Ascending aorta (tissue), 2 donors: ENCODE measurements at regions of chr13 and their contacts with region 1.

Region 1: GRCh38 chr13:48233046-48233907 is at the start of gene ITM2B:
- DNase-seq: peak in 1 of 2 donors; percentile 84
- H3K4me3 ChIP-seq: peak within 1 kb of the TSS; percentile 99 to 100
- H3K27ac ChIP-seq: peak within 1 kb of the TSS; percentile 100
- H3K4me1 ChIP-seq: peaks cover 6 to 23% of the 10 kb centered on the region in 2 donors
- H3K27me3 ChIP-seq: no peaks in the 10 kb centered on the region
- CTCF ChIP-seq: peak; percentile 24 to 54 (median 47)
- total RNA-seq, gene ITM2B: 345 TPM

Region 2: DNA sequence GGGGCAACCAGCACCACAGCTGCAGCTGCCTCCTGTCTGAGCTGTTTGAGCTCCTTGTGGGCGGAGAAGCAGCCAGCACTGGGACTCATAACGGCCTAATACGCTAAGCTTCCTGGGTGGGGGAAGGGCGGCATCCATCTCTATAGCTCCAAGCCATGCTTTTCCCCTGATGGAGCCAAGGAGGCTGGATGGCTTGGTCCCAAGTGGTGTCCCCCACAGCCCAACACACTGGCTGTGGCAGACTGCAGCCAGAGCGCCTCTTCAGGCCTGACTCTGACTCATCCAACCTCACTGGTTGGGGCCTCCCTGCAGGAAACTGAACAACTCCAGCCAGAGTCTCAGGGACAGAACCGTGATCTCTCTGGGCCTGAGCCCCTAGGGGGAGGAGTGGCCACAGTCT is 769.6 kb before region 1 on chr13:
- intact Hi-C with region 1: no loop called
- DNase-seq: no peak
- H3K4me3 ChIP-seq: no peak overlapping the region
- H3K27ac ChIP-seq: no peak overlapping the region
- H3K4me1 ChIP-seq: no peaks in the 10 kb centered on the region
- H3K27me3 ChIP-seq: no peaks in the 10 kb centered on the region
- CTCF ChIP-seq: no peak

Region 3: GRCh38 chr13:47621931-47622330 is 611.3 kb before region 1 on chr13:
- intact Hi-C with region 1: no loop called
- DNase-seq: no peak
- H3K4me3 ChIP-seq: no peak overlapping the region
- H3K27ac ChIP-seq: no peak overlapping the region
- H3K4me1 ChIP-seq: no peaks in the 10 kb centered on the region
- H3K27me3 ChIP-seq: no peaks in the 10 kb centered on the region
- CTCF ChIP-seq: no peak

Region 4: GRCh38 chr13:48037346-48038173 is 195.7 kb before region 1 on chr13 and contains the start of gene NUDT15:
- intact Hi-C with region 1: loop called (anchors 5 kb)
- DNase-seq: peak; percentile 61 to 95
- H3K4me3 ChIP-seq: peak within 1 kb of the TSS; percentile 78 to 91
- H3K27ac ChIP-seq: peak within 1 kb of the TSS; percentile 94 to 96
- H3K4me1 ChIP-seq: peaks cover 0 to 11% of the 10 kb centered on the region in 2 donors
- H3K27me3 ChIP-seq: no peaks in the 10 kb centered on the region
- CTCF ChIP-seq: peak; percentile 95 to 97 (median 96)
- total RNA-seq, gene NUDT15: 4.2 TPM

Region 5: GRCh38 chr13:48126944-48127830 is 106.1 kb before region 1 on chr13:
- intact Hi-C with region 1: loop called (anchors 1 kb)
- DNase-seq: peak in 1 of 2 donors; percentile 80
- H3K4me3 ChIP-seq: peak overlapping the region in 1 of 2 donors; percentile 43
- H3K27ac ChIP-seq: peak overlapping the region; percentile 80 to 91
- H3K4me1 ChIP-seq: peaks cover 8 to 13% of the 10 kb centered on the region in 2 donors
- H3K27me3 ChIP-seq: no peaks in the 10 kb centered on the region
- CTCF ChIP-seq: peak; percentile 61 to 65 (median 64)

Region 6: DNA sequence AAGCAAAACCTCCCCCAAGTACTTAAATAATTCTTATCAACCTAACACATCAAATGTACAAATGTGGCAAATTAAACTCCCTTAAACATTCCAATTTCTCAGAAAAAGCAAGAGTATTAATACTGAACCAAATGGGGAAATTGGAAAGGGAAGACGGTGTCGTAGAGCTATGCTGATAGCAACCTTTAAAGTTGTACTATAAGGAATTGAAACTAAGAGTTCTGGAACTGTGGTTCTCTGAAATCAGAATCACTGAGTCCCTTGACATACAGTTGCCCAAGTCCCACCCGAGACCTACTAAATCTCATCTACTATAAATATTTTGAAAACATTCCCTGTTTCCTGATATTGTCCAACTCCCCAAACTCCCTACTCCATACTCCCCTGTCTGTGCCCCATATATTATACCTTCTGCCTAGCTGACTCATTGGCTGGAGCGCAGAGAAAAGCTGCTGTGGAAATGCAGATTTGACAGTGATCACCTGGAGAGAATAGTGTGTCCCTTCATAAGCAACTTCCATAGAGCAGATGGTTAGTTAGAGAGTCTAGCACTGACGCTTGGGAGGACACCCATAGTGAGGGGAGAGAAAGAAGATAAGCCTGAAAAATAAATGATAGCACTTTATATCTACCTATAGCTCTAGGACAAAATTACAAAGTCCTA is 51.7 kb before region 1 on chr13:
- intact Hi-C with region 1: no loop called
- DNase-seq: no peak
- H3K4me3 ChIP-seq: no peak overlapping the region
- H3K27ac ChIP-seq: no peak overlapping the region
- H3K4me1 ChIP-seq: no peaks in the 10 kb centered on the region
- H3K27me3 ChIP-seq: no peaks in the 10 kb centered on the region
- CTCF ChIP-seq: no peak

Region 7: GRCh38 chr13:48400850-48401291 is 167.6 kb after region 1 on chr13:
- intact Hi-C with region 1: loop called (anchors 10 kb)
- DNase-seq: no peak
- H3K4me3 ChIP-seq: no peak overlapping the region
- H3K27ac ChIP-seq: peak overlapping the region; percentile 74
- H3K4me1 ChIP-seq: peaks cover 3 to 40% of the 10 kb centered on the region in 2 donors
- H3K27me3 ChIP-seq: no peaks in the 10 kb centered on the region
- CTCF ChIP-seq: no peak

Region 8: DNA sequence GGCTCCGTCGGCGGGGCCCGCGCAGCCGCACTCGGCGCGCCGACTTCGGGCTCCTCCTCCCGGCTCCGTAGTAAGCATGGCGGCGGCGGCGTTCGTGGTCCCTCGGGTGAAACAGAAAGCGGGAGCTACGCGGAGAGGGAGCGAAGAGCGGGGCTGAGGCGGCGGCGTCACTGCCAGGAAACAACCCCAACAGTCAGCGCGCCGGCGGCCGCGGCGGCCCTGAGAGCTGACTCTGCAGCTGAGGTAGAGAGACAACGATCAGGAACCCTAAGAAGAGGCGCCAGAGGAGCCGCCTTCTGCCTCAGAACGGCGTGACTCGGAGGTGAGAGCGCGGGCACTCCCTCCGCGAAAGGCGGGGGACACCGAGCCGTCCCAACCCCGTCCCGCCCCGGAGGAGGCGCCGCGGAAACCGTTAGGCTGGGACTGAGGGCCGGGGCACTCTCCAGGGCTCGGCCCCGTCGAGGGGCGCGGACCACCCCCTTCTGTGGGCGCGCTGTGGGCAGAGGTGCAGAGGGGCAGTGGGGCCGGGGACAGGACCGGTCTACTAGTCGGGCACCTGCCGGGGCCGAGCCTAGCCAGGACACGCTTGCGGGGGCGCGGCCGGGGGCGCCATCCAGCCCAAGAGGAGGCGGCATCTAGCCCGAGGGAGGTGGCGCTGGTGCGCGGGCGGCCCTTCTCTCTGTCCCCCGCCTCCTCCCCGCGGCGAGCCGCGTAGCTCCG is 742.7 kb after region 1 on chr13 and contains the start of gene FNDC3A:
- intact Hi-C with region 1: loop called (anchors 10 kb)
- DNase-seq: peak; percentile 59 to 90
- H3K4me3 ChIP-seq: peak within 1 kb of the TSS; percentile 79 to 95
- H3K27ac ChIP-seq: peak within 1 kb of the TSS; percentile 97 to 100
- H3K4me1 ChIP-seq: peaks cover 0 to 3% of the 10 kb centered on the region in 2 donors
- H3K27me3 ChIP-seq: no peaks in the 10 kb centered on the region
- CTCF ChIP-seq: peak in 1 of 3 experiments; percentile 5
- total RNA-seq, gene FNDC3A: 22.7 TPM

Region 9: DNA sequence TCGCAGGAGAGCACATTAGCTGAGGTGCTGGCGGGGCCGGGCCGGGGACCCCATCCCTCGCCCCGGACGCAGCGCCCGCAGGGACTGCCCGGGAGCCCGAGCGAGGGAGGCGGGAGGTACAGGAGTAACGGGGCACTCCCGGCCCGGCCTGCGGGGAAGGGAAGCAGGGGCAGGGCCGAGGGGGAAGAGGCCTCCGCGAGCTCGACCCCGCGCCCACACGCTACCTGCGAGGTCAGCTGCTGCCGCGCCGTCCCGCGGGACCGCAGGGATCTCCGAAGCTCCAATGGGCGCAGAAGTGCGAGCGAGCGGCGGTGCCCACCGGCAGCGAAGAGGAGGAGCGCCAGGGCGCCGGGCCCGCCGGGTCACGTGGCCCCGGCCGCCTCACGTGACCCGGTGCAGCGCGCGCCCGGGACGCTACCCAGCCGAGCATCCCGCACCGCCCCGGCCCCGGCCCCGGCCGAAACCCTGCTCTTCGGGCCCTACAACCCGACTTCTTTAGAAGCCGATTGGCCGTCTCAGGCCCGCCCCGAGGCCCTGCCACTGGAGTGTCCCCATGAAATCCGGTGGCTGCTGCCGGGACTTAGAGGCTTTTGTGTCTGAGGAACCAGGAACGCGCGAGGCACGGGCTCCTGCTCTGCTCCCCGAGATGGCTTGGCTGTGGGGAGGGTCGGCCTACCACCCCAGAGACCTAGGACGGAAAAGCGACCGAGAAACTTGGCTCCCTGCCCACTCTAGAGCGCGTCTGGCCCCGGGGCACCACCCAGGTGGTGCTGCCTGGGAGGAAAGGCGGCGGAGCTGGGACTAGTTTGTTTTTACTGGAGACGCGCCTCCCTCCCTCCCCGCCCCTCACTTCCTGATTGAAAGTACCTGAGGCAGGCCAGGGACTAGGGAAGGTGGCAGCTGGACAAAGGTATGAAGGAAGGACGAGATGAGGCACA is 1352.2 kb after region 1 on chr13 and contains the start of gene RCBTB1:
- intact Hi-C with region 1: loop called (anchors 5 kb)
- DNase-seq: peak in 1 of 2 donors; percentile 81
- H3K4me3 ChIP-seq: peak within 1 kb of the TSS; percentile 73 to 92
- H3K27ac ChIP-seq: peak within 1 kb of the TSS; percentile 71 to 72
- H3K4me1 ChIP-seq: peaks cover 0 to 15% of the 10 kb centered on the region in 2 donors
- H3K27me3 ChIP-seq: no peaks in the 10 kb centered on the region
- CTCF ChIP-seq: no peak
- total RNA-seq, gene RCBTB1: 2.0 TPM